GM13976 (cell line): ENCODE measurements at regions of chr3 and their contacts with region 1.

Region 1: DNA sequence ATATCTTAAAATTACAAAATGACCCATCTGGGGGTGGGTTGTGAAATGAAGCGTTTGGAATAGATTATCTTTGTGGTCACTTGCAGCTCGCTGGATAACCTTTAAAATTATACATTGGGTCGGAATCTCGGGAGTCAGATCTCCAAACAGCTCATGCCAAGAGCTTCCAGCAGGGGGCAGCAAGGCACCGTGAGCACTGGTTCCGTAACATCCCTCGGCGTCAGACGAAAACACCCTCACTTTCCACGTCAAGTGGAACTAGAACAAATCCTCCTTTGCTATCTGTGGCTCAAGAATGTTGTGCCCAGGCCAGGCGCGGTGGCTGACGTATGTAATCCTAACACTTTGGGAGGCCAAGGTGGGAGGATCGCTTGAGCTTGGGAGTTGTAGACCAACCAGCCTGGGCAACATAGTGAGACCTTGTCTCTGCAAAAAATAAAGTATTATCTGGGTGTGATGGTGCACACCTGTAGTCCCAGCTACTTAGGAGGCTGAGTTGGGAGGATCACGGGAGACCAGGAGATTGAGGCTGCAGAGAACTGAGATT is 31.1 kb downstream of the UMPS start:
- DNase-seq: peak; percentile 81
- CTCF ChIP-seq: peak; percentile 94

Region 2: DNA sequence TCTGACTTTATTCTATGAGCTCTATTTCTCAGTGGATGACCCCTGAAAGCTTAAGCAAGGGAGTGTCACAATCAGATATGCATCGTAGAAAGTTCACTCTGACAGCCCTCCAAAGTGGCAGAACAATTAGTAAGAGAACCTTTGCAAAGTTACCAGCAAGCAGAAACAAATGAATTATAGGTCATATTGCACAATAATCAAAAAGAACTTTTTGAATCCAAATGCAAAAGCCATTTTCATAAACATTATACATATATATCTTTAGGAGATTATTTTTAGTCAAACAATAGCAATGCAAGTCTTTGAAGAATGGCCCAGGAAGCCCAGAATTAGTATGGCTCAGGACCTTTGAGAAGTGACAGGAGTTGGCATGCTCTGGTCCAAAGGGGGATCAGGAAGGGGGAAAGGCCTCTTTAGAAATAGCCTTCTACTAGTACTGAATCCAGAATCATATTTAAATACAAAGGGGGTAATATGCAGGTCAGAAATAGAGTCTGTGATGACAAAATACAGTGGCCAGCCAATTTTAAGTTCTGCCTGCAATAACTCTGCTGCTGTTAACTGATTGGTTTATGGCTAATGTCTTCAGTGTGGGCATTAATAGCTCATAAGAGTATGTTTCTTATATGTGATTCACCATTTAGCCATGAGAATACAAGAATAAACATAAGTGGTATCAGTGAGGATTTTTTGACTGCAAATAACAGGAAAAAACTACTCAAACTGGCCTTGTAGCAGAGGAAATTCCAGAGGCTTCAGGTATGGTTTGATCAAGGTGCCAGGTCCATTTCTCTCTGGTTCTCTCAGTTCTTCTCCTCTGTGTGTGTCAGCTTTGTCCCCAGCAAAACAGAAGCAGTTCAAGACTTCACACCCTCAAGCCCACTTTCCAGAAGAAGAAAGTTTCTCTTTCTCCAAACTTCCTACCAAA is 142.8 kb after region 1 on chr3:
- in situ Hi-C with region 1: loop called (anchors 5 kb)
- DNase-seq: no peak
- CTCF ChIP-seq: no peak

Region 3: GRCh38 chr3:125437631-125438435 is 676.5 kb after region 1 on chr3:
- in situ Hi-C with region 1: loop called (anchors 25 kb)
- DNase-seq: peak; percentile 52
- CTCF ChIP-seq: peak; percentile 91

Region 4: GRCh38 chr3:125585595-125586223 is 824.4 kb after region 1 on chr3:
- in situ Hi-C with region 1: loop called (anchors 25 kb)
- DNase-seq: peak; percentile 49
- CTCF ChIP-seq: peak; percentile 82